Gastrocnemius medialis (tissue), 4 donors: ENCODE measurements at regions of chr1 and their contacts with region 1.

Region 1: GRCh38 chr1:212791676-212792395 is at the starts of genes NSL1 and TATDN3:
- DNase-seq: peak; percentile 73 to 79
- ATAC-seq: peak; percentile 96 to 97
- H3K4me3 ChIP-seq: peak within 1 kb of the TSS; percentile 76 to 98 (median 94)
- H3K27ac ChIP-seq: peak within 1 kb of the TSS; percentile 87 to 96 (median 90)
- H3K4me1 ChIP-seq: peaks cover 13 to 23% of the 10 kb centered on the region in 2 donors
- H3K27me3 ChIP-seq: no peaks in the 10 kb centered on the region
- CTCF ChIP-seq: peak in 2 of 5 experiments; percentile 11 to 16
- POLR2A ChIP-seq: peak; percentile 58 to 61
- total RNA-seq, gene NSL1: 21.3 to 42.6 (median 28.2) TPM
- total RNA-seq, gene TATDN3: 19.5 to 27.3 (median 25.6) TPM

Region 2: GRCh38 chr1:212665241-212666115 is 126.4 kb before region 1 on chr1:
- in situ Hi-C with region 1: loop called in 1 of 4 experiments (anchors 10 kb)
- intact Hi-C with region 1: no loop called
- DNase-seq: peak; percentile 31 to 64
- ATAC-seq: peak; percentile 88 to 96
- H3K4me3 ChIP-seq: peak overlapping the region; percentile 61 to 73 (median 66)
- H3K27ac ChIP-seq: peak overlapping the region; percentile 39 to 74 (median 66)
- H3K4me1 ChIP-seq: peaks cover 0 to 23% of the 10 kb centered on the region in 2 donors
- H3K27me3 ChIP-seq: no peaks in the 10 kb centered on the region
- CTCF ChIP-seq: peak; percentile 83 to 92 (median 87)
- POLR2A ChIP-seq: no peak

Region 3: DNA sequence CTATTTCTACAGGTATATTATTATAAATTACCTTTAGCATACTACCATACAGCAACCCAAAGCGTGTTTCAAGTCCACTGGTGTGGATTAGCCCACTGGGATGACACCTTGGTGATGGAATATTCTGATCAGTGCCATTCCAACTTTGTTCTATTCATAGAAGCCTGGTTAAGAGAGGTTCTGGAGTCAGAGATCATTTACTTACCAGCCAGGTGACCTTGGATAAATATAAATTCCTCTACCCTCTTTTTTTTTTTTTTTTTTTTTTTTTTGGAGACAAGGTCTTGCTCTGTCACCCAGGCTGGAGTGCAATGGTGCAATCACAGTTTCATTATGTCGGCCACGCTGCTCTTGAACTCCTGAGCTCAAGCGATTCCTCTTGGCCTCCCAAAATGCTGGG is 55.7 kb after region 1 on chr1 and contains the start of gene SPATA45:
- in situ Hi-C with region 1: no loop called
- intact Hi-C with region 1: no loop called
- DNase-seq: no peak
- ATAC-seq: no peak
- H3K4me3 ChIP-seq: no peak within 1 kb of the TSS
- H3K27ac ChIP-seq: no peak within 1 kb of the TSS
- H3K4me1 ChIP-seq: no peaks in the 10 kb centered on the region
- H3K27me3 ChIP-seq: no peaks in the 10 kb centered on the region
- CTCF ChIP-seq: no peak
- POLR2A ChIP-seq: no peak
- total RNA-seq, gene SPATA45: not detected

Region 4: GRCh38 chr1:212857992-212858460 is 66.2 kb after region 1 on chr1 and contains the start of gene FLVCR1:
- in situ Hi-C with region 1: no loop called
- intact Hi-C with region 1: loop called (anchors 5 kb)
- DNase-seq: peak; percentile 94
- ATAC-seq: peak; percentile 97 to 98
- H3K4me3 ChIP-seq: peak within 1 kb of the TSS; percentile 86 to 98 (median 96)
- H3K27ac ChIP-seq: peak within 1 kb of the TSS; percentile 84 to 87 (median 86)
- H3K4me1 ChIP-seq: peaks cover 7 to 14% of the 10 kb centered on the region in 2 donors
- H3K27me3 ChIP-seq: no peaks in the 10 kb centered on the region
- CTCF ChIP-seq: no peak
- POLR2A ChIP-seq: peak; percentile 59 to 75
- total RNA-seq, gene FLVCR1: 0.66 to 19.8 (median 1.7) TPM

Region 5: GRCh38 chr1:213015099-213016050 is 223.5 kb after region 1 on chr1 and contains the start of gene ANGEL2:
- in situ Hi-C with region 1: loop called in 1 of 4 experiments (anchors 10 kb)
- intact Hi-C with region 1: loop called (anchors 5 kb)
- DNase-seq: peak; percentile 92 to 96
- ATAC-seq: peak; percentile 99 to 100
- H3K4me3 ChIP-seq: peak within 1 kb of the TSS; percentile 64 to 96 (median 90)
- H3K27ac ChIP-seq: peak within 1 kb of the TSS; percentile 81 to 92 (median 86)
- H3K4me1 ChIP-seq: peaks cover 16 to 20% of the 10 kb centered on the region in 2 donors
- H3K27me3 ChIP-seq: no peaks in the 10 kb centered on the region
- CTCF ChIP-seq: no peak
- POLR2A ChIP-seq: peak in 1 of 2 donors; percentile 27
- total RNA-seq, gene ANGEL2: 17.7 to 33.2 (median 25.1) TPM

Region 6: GRCh38 chr1:213148905-213149304 is 357.1 kb after region 1 on chr1:
- in situ Hi-C with region 1: no loop called
- intact Hi-C with region 1: no loop called
- DNase-seq: no peak
- ATAC-seq: no peak
- H3K4me3 ChIP-seq: no peak overlapping the region
- H3K27ac ChIP-seq: no peak overlapping the region
- H3K4me1 ChIP-seq: no peaks in the 10 kb centered on the region
- H3K27me3 ChIP-seq: no peaks in the 10 kb centered on the region
- CTCF ChIP-seq: no peak
- POLR2A ChIP-seq: no peak

Region 7: GRCh38 chr1:213606252-213606820 is 814.5 kb after region 1 on chr1:
- in situ Hi-C with region 1: no loop called
- intact Hi-C with region 1: no loop called
- DNase-seq: no peak
- ATAC-seq: peak in 1 of 2 donors; percentile 55
- H3K4me3 ChIP-seq: no peak overlapping the region
- H3K27ac ChIP-seq: no peak overlapping the region
- H3K4me1 ChIP-seq: no peaks in the 10 kb centered on the region
- H3K27me3 ChIP-seq: peaks cover 0 to 4% (median 0%) of the 10 kb centered on the region in 3 donors
- CTCF ChIP-seq: no peak
- POLR2A ChIP-seq: no peak